ENCODE measurements at regions of chr1 and their contacts with region 1.

Region 1: GRCh38 chr1:17053685-17054410 is at the start of gene SDHB:
- DNase-seq: peak; percentile 98 to 100 (median 99)
- H3K4me3 ChIP-seq: peak within 1 kb of the TSS; percentile 72 to 89
- H3K4me3 Mint-ChIP-seq: peak within 1 kb of the TSS; percentile 97 to 100 (median 99)
- H3K27ac ChIP-seq: peak within 1 kb of the TSS; percentile 83
- H3K27ac Mint-ChIP-seq: peak within 1 kb of the TSS; percentile 95 to 99 (median 99)
- H3K4me1 ChIP-seq: peaks cover 18% of the 10 kb centered on the region
- H3K4me1 Mint-ChIP-seq: peaks cover 17 to 38% (median 27%) of the 10 kb centered on the region in 4 donors
- H3K27me3 ChIP-seq: no peaks in the 10 kb centered on the region
- H3K27me3 Mint-ChIP-seq: peaks cover 0 to 2% of the 10 kb centered on the region in 2 donors
- total RNA-seq, gene SDHB: 57.0 to 66.4 TPM

Region 2: DNA sequence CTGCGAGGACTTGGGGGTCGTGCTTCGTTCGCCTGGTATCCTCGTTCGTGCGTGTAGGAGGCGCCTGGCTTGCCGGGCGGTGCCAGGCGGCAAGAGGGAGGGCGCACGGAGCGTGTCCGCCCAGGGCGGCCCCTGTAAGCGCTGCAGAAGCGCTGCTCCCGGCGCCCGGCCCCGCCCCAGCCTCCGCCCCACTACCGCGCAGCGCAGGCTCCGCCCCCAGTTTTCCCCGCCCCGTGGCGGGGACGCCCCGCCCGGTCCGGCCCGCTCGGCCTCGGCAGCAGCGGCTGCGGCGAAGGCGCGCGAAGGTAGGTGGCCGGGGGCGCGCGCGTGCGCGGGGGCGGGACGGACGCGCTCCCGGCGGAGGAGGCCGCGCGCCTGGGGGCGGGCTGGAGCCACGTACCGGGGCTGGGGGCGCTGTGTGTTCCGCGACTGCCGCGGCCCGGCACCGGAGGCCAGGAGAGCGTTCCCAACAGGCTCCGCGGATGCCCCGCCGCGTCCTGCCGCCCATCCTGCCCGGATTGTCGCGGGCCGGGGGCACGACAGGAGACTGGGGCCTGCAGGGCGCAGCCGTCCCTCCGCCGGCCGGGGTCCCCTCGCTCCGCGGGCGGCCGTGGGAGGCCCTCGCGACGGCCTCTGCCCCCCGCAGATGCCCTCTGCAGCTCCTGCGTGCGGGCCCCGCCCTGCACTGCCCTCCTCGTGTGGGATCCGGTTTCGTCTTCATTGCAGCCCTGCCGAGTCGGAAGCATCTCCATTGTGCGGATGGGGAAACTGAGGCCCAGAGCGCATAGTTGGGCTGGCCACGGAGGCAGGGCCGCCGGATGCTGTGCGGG is 139.8 kb before region 1 on chr1:
- CTCF ChIA-PET with region 1: no interaction called
- POLR2A ChIA-PET with region 1: no interaction called
- intact Hi-C with region 1: loop called (anchors 5 kb)
- DNase-seq: peak; percentile 88 to 93 (median 90)
- H3K4me3 ChIP-seq: peak overlapping the region; percentile 17 to 80
- H3K4me3 Mint-ChIP-seq: peak overlapping the region; percentile 85 to 92 (median 89)
- H3K27ac ChIP-seq: peak overlapping the region; percentile 67
- H3K27ac Mint-ChIP-seq: peak overlapping the region; percentile 66 to 93 (median 89)
- H3K4me1 ChIP-seq: peaks cover 27% of the 10 kb centered on the region
- H3K4me1 Mint-ChIP-seq: peaks cover 5 to 53% (median 37%) of the 10 kb centered on the region in 4 donors
- H3K27me3 ChIP-seq: no peaks in the 10 kb centered on the region
- H3K27me3 Mint-ChIP-seq: no peaks in the 10 kb centered on the region

Measured in CD4-positive, alpha-beta memory T cell (primary cell).